GM12878 (cell line): ENCODE measurements at regions of chrX and their contacts with region 1.

Region 1: GRCh38 chrX:109270580-109271484 is 211.1 kb downstream of the GUCY2F start:
- DNase-seq: peak; percentile 97
- ATAC-seq: peak; percentile 98
- H3K4me3 ChIP-seq: no peak overlapping the region
- H3K27ac ChIP-seq: peak overlapping the region; percentile 52; the same call in 1 of the 2 replicates
- H3K4me1 ChIP-seq: peaks cover 15% of the 10 kb centered on the region
- H3K27me3 ChIP-seq: no peaks in the 10 kb centered on the region
- CTCF ChIP-seq: no peak
- EP300 ChIP-seq: peak; percentile 89; a peak in 3 of 4 replicates
- POLR2A ChIP-seq: no peak
- RAD21 ChIP-seq: 0 out of 2 replicates have a peak, but pooled peaks have one; percentile 5

Region 2: GRCh38 chrX:109036624-109037023 is 234.2 kb before region 1 on chrX:
- CTCF ChIA-PET with region 1: no interaction called
- POLR2A ChIA-PET with region 1: no interaction called
- RAD21 ChIA-PET with region 1: no interaction called
- SMC1A ChIA-PET with region 1: interaction called, 13 read pairs
- in situ Hi-C with region 1: no loop called
- intact Hi-C with region 1: loop called (anchors 2 kb)
- DNase-seq: peak; percentile 8
- ATAC-seq: peak; percentile 88
- H3K4me3 ChIP-seq: no peak overlapping the region
- H3K27ac ChIP-seq: no peak overlapping the region
- H3K4me1 ChIP-seq: no peaks in the 10 kb centered on the region
- H3K27me3 ChIP-seq: no peaks in the 10 kb centered on the region
- CTCF ChIP-seq: no peak
- EP300 ChIP-seq: peak in 1 of 2 experiments; percentile 13; a peak in 1 of 4 replicates
- POLR2A ChIP-seq: no peak
- RAD21 ChIP-seq: no peak

Region 3: DNA sequence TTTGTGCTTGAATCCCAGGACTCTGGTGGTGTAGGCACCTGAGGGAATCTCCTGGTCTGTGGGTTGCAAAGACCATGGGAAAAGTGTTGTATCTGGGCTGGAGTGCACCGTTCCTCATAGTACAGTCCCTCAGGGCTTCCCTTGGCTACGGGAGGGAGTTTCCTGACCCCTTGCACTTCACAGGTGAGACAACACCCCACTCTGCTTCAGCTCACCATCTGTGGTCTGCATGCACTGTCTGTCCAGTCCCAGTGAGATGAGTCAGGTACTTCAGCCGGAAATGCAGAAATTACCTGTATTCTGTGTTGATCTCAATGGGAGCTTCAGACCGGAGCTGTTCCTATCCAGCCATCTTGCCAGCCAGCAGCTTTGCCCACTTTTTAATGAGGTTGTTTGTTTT is 181.5 kb before region 1 on chrX:
- CTCF ChIA-PET with region 1: no interaction called
- POLR2A ChIA-PET with region 1: no interaction called
- RAD21 ChIA-PET with region 1: interaction called, 6 read pairs
- SMC1A ChIA-PET with region 1: interaction called, 7 read pairs
- in situ Hi-C with region 1: no loop called
- intact Hi-C with region 1: loop called (anchors 5 kb)
- DNase-seq: peak; percentile 32
- ATAC-seq: peak; percentile 89
- H3K4me3 ChIP-seq: no peak overlapping the region
- H3K27ac ChIP-seq: no peak overlapping the region
- H3K4me1 ChIP-seq: no peaks in the 10 kb centered on the region
- H3K27me3 ChIP-seq: no peaks in the 10 kb centered on the region
- CTCF ChIP-seq: no peak
- EP300 ChIP-seq: no peak
- POLR2A ChIP-seq: no peak
- RAD21 ChIP-seq: no peak

Region 4: GRCh38 chrX:109187473-109188168 is 83.2 kb before region 1 on chrX:
- CTCF ChIA-PET with region 1: interaction called, 14 read pairs
- POLR2A ChIA-PET with region 1: interaction called, 32 read pairs
- RAD21 ChIA-PET with region 1: interaction called, 155 read pairs
- SMC1A ChIA-PET with region 1: interaction called, 168 read pairs
- in situ Hi-C with region 1: no loop called
- intact Hi-C with region 1: loop called (anchors 2 kb)
- DNase-seq: no peak
- ATAC-seq: peak; percentile 87
- H3K4me3 ChIP-seq: no peak overlapping the region
- H3K27ac ChIP-seq: no peak overlapping the region
- H3K4me1 ChIP-seq: peaks cover 4% of the 10 kb centered on the region; the same call in 1 of the 2 replicates
- H3K27me3 ChIP-seq: no peaks in the 10 kb centered on the region
- CTCF ChIP-seq: no peak
- EP300 ChIP-seq: peak in 1 of 2 experiments; percentile 36; a peak in 1 of 4 replicates
- POLR2A ChIP-seq: no peak
- RAD21 ChIP-seq: no peak

Region 5: DNA sequence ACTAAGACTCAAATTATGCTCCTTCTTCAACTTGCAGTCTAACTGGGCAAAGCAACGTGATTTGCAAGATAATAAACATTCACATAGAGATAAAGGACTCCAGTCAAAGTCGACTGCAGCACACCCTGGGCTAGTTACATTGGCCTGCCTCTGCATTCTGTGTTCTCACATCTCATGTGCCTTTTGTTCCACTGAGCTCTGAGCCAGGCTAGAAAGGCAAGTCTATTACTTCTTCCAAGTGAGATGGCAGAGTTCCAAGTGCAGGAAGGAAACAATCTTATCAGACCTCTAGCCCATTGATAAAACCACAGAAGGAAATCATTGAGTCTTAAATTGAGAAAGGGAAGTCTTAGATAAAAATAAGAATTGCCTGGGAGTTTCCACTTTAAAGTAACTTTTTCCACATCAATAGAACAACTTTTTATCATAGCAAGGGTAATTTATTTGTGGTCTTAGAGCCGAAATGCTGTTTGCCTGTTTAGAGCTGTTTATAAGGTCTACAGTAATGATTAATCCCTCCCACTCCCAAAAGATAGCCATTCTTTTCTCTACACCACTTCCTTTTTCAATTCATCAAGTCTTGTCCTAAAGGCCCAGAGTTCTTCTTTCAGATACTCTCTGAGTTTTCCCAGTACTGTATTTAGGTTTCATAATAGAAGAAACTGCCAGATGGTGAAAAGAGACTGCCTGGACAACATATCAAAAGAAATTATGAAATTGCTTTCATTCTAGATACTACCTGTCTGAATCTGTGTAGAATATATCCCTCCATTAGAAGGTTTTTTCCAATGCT is 10.8 kb after region 1 on chrX:
- CTCF ChIA-PET with region 1: interaction called, 4 read pairs
- POLR2A ChIA-PET with region 1: interaction called, 5 read pairs
- RAD21 ChIA-PET with region 1: interaction called, 22 read pairs
- SMC1A ChIA-PET with region 1: interaction called, 54 read pairs
- in situ Hi-C with region 1: no loop called
- intact Hi-C with region 1: loop called (anchors 1 kb)
- DNase-seq: no peak
- ATAC-seq: peak; percentile 83
- H3K4me3 ChIP-seq: no peak overlapping the region
- H3K27ac ChIP-seq: no peak overlapping the region
- H3K4me1 ChIP-seq: no peaks in the 10 kb centered on the region
- H3K27me3 ChIP-seq: no peaks in the 10 kb centered on the region
- CTCF ChIP-seq: no peak
- EP300 ChIP-seq: no peak
- POLR2A ChIP-seq: no peak
- RAD21 ChIP-seq: no peak

Region 6: GRCh38 chrX:109301177-109301576 is 30.3 kb after region 1 on chrX:
- CTCF ChIA-PET with region 1: interaction called, 3 read pairs
- POLR2A ChIA-PET with region 1: no interaction called
- RAD21 ChIA-PET with region 1: interaction called, 8 read pairs
- SMC1A ChIA-PET with region 1: interaction called, 11 read pairs
- in situ Hi-C with region 1: no loop called
- intact Hi-C with region 1: no loop called
- DNase-seq: no peak
- ATAC-seq: peak; percentile 31; the same call in 1 of the 3 replicates
- H3K4me3 ChIP-seq: no peak overlapping the region
- H3K27ac ChIP-seq: no peak overlapping the region
- H3K4me1 ChIP-seq: no peaks in the 10 kb centered on the region
- H3K27me3 ChIP-seq: no peaks in the 10 kb centered on the region
- CTCF ChIP-seq: no peak
- EP300 ChIP-seq: no peak
- POLR2A ChIP-seq: no peak
- RAD21 ChIP-seq: no peak

Region 7: GRCh38 chrX:109464231-109464630 is 193.4 kb after region 1 on chrX:
- CTCF ChIA-PET with region 1: no interaction called
- POLR2A ChIA-PET with region 1: no interaction called
- RAD21 ChIA-PET with region 1: no interaction called
- SMC1A ChIA-PET with region 1: no interaction called
- in situ Hi-C with region 1: no loop called
- intact Hi-C with region 1: no loop called
- DNase-seq: no peak
- ATAC-seq: no peak
- H3K4me3 ChIP-seq: no peak overlapping the region
- H3K27ac ChIP-seq: no peak overlapping the region
- H3K4me1 ChIP-seq: no peaks in the 10 kb centered on the region
- H3K27me3 ChIP-seq: no peaks in the 10 kb centered on the region
- CTCF ChIP-seq: no peak
- EP300 ChIP-seq: no peak
- POLR2A ChIP-seq: no peak
- RAD21 ChIP-seq: no peak